ENCODE measurements at regions of chr9 and their contacts with region 1.

Region 1: GRCh38 chr9:92764988-92765936 is 629 bp upstream of the BICD2 start:
- DNase-seq: peak; percentile 89 to 99
- H3K4me3 ChIP-seq: peak overlapping the region; percentile 67
- H3K27ac ChIP-seq: peak overlapping the region; percentile 90
- H3K4me1 ChIP-seq: peaks cover 16% of the 10 kb centered on the region
- H3K27me3 ChIP-seq: no peaks in the 10 kb centered on the region
- CTCF ChIP-seq: peak; percentile 95

Region 2: GRCh38 chr9:92325269-92325990 is 439.8 kb before region 1 on chr9 and contains the starts of genes CENPP and NOL8:
- CTCF ChIA-PET with region 1: no interaction called
- POLR2A ChIA-PET with region 1: no interaction called
- intact Hi-C with region 1: loop called (anchors 10 kb)
- DNase-seq: peak; percentile 76 to 86
- H3K4me3 ChIP-seq: peak within 1 kb of the TSS; percentile 87
- H3K27ac ChIP-seq: peak within 1 kb of the TSS; percentile 90
- H3K4me1 ChIP-seq: peaks cover 22% of the 10 kb centered on the region
- H3K27me3 ChIP-seq: no peaks in the 10 kb centered on the region
- CTCF ChIP-seq: no peak
- total RNA-seq, gene CENPP: 7.6 and 10.0 TPM in 2 replicates
- total RNA-seq, gene NOL8: 35.7 and 46.9 TPM in 2 replicates

Region 3: GRCh38 chr9:92716557-92716956 is 48.7 kb before region 1 on chr9:
- CTCF ChIA-PET with region 1: interaction called, 3 read pairs
- POLR2A ChIA-PET with region 1: no interaction called
- intact Hi-C with region 1: loop called (anchors 1 kb)
- DNase-seq: peak in 1 of 2 experiments; percentile 77
- H3K4me3 ChIP-seq: no peak overlapping the region
- H3K27ac ChIP-seq: no peak overlapping the region
- H3K4me1 ChIP-seq: no peaks in the 10 kb centered on the region
- H3K27me3 ChIP-seq: no peaks in the 10 kb centered on the region
- CTCF ChIP-seq: peak; percentile 95

Region 4: GRCh38 chr9:92781923-92782322 is 16.7 kb after region 1 on chr9:
- CTCF ChIA-PET with region 1: no interaction called
- POLR2A ChIA-PET with region 1: no interaction called
- intact Hi-C with region 1: loop called (anchors 2 kb)
- DNase-seq: peak; percentile 76 to 97
- H3K4me3 ChIP-seq: no peak overlapping the region
- H3K27ac ChIP-seq: peak overlapping the region; percentile 66
- H3K4me1 ChIP-seq: peaks cover 31% of the 10 kb centered on the region
- H3K27me3 ChIP-seq: no peaks in the 10 kb centered on the region
- CTCF ChIP-seq: no peak

Region 5: DNA sequence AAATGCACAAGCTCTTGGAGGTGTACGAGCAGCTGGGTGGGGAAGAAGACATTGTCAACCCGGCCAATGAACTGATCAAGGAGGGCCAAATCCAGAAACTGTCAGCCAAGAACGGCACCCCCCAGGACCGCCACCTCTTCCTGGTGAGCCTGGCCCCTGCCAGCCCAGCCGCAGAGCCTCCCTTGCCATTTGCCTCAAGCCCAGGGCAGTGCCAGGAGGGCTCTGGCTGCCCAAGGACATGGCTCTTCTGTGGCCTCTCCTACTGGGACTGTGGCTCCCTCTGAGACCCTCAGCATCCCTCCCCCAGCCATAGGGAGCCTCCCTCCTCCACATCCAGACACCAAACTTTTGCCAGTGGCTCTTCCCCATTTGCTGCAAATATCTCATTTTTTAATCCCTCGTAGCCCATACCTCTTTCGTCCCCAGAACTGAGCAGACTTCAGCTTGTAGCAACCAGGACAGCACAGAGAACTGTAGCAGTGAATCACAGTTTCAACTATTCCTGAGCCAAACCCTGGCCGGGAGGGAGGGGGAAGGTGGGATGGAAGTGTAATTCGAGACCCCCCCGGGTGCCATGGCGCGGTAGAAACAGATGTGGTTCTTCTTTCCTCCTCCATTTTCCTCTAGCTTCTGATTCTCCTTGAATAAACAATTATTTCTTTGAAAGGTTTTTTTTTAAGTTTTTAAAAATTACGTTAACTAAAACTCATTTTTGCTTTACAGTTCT is 248.8 kb after region 1 on chr9:
- CTCF ChIA-PET with region 1: no interaction called
- POLR2A ChIA-PET with region 1: no interaction called
- intact Hi-C with region 1: no loop called
- DNase-seq: no peak
- H3K4me3 ChIP-seq: no peak overlapping the region
- H3K27ac ChIP-seq: no peak overlapping the region
- H3K4me1 ChIP-seq: no peaks in the 10 kb centered on the region
- H3K27me3 ChIP-seq: no peaks in the 10 kb centered on the region
- CTCF ChIP-seq: no peak

Region 6: GRCh38 chr9:93095205-93096130 is 330.2 kb after region 1 on chr9:
- CTCF ChIA-PET with region 1: no interaction called
- POLR2A ChIA-PET with region 1: no interaction called
- intact Hi-C with region 1: loop called (anchors 10 kb)
- DNase-seq: peak; percentile 90 to 100
- H3K4me3 ChIP-seq: peak overlapping the region; percentile 90; the same call in 1 of the 2 replicates
- H3K27ac ChIP-seq: peak overlapping the region; percentile 82
- H3K4me1 ChIP-seq: peaks cover 57% of the 10 kb centered on the region
- H3K27me3 ChIP-seq: no peaks in the 10 kb centered on the region
- CTCF ChIP-seq: no peak

Measured in PC-9 (cell line).